ENCODE measurements at regions of chr18 and their contacts with region 1.

Region 1: GRCh38 chr18:10851824-10852319 is 297.5 kb downstream of the PIEZO2 start:
- DNase-seq: no peak
- ATAC-seq: no peak
- H3K4me3 Mint-ChIP-seq: no peak overlapping the region
- H3K27ac Mint-ChIP-seq: no peak overlapping the region
- H3K4me1 Mint-ChIP-seq: no peaks in the 10 kb centered on the region
- H3K27me3 Mint-ChIP-seq: peaks cover 8% of the 10 kb centered on the region

Region 2: GRCh38 chr18:10705786-10706185 is 146.1 kb before region 1 on chr18:
- CTCF ChIA-PET with region 1: no interaction called
- POLR2A ChIA-PET with region 1: no interaction called
- intact Hi-C with region 1: no loop called
- DNase-seq: no peak
- ATAC-seq: no peak
- H3K4me3 Mint-ChIP-seq: no peak overlapping the region
- H3K27ac Mint-ChIP-seq: no peak overlapping the region
- H3K4me1 Mint-ChIP-seq: no peaks in the 10 kb centered on the region
- H3K27me3 Mint-ChIP-seq: peaks cover 4% of the 10 kb centered on the region

Region 3: GRCh38 chr18:10787293-10787901 is 64.5 kb before region 1 on chr18:
- CTCF ChIA-PET with region 1: interaction called, 3 read pairs
- POLR2A ChIA-PET with region 1: no interaction called
- intact Hi-C with region 1: loop called in 1 of 2 experiments (anchors 2 kb)
- DNase-seq: peak; percentile 95
- ATAC-seq: peak; percentile 89
- H3K4me3 Mint-ChIP-seq: no peak overlapping the region
- H3K27ac Mint-ChIP-seq: no peak overlapping the region
- H3K4me1 Mint-ChIP-seq: peaks cover 4% of the 10 kb centered on the region
- H3K27me3 Mint-ChIP-seq: peaks cover 39% of the 10 kb centered on the region

Region 4: DNA sequence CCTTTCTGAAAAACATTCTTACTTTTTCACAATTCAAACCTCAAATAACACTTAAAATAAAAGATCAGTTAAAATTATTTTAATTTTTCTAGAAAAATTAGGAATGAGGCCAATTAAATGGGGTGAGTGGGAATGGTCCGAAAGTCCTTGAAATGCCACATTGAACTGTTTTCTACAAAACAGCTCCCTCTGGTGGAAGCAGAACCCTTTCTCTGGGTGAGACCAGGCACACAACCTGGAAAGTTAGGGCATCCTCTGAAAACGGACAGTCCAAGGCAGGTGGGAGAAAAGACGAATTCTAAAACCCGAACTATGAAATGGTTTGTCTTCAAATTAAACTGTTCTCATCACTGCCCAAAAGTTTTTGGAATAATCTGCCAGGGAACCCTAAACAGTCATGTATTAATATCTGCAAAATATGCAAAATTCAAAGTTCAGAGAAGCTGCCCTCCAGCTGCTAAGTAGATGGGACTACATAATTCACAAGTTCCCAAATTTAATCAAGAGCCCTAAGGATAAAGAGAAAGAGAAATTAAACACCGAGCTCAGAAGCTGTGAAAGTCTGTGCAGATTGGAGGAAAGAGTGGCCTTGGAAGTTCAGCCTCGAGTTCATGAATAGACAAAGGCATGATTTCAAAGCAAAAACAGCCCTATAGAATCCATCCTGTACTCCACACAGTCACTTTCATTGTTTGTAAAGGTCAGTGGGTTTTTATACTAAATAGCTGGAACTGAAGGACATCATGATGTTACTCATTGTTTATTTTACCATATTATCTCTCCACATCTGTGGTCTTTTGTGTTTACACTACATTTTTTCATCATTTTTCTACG is 189.2 kb after region 1 on chr18:
- CTCF ChIA-PET with region 1: interaction called, 6 read pairs
- POLR2A ChIA-PET with region 1: no interaction called
- intact Hi-C with region 1: loop called (anchors 1 kb)
- DNase-seq: peak; percentile 36
- ATAC-seq: no peak
- H3K4me3 Mint-ChIP-seq: no peak overlapping the region
- H3K27ac Mint-ChIP-seq: no peak overlapping the region
- H3K4me1 Mint-ChIP-seq: no peaks in the 10 kb centered on the region
- H3K27me3 Mint-ChIP-seq: peaks cover 5% of the 10 kb centered on the region

Region 5: GRCh38 chr18:11310476-11311086 is 458.7 kb after region 1 on chr18:
- CTCF ChIA-PET with region 1: interaction called, 3 read pairs
- POLR2A ChIA-PET with region 1: no interaction called
- intact Hi-C with region 1: loop called in 1 of 2 experiments (anchors 10 kb)
- DNase-seq: peak; percentile 66
- ATAC-seq: no peak
- H3K4me3 Mint-ChIP-seq: no peak overlapping the region
- H3K27ac Mint-ChIP-seq: no peak overlapping the region
- H3K4me1 Mint-ChIP-seq: peaks cover 4% of the 10 kb centered on the region
- H3K27me3 Mint-ChIP-seq: peaks cover 5% of the 10 kb centered on the region

Region 6: GRCh38 chr18:11553098-11553940 is 701.4 kb after region 1 on chr18:
- CTCF ChIA-PET with region 1: interaction called, 14 read pairs
- POLR2A ChIA-PET with region 1: no interaction called
- intact Hi-C with region 1: loop called (anchors 1 to 5 kb)
- DNase-seq: peak; percentile 51
- ATAC-seq: peak; percentile 61
- H3K4me3 Mint-ChIP-seq: no peak overlapping the region
- H3K27ac Mint-ChIP-seq: no peak overlapping the region
- H3K4me1 Mint-ChIP-seq: no peaks in the 10 kb centered on the region
- H3K27me3 Mint-ChIP-seq: peaks cover 2% of the 10 kb centered on the region

Measured in activated CD4-positive, alpha-beta T cell treated with anti-CD3 and anti-CD28 coated beads for 36 hours (primary cell).